ENCODE measurements at regions of chr3 and their contacts with region 1.

Region 1: GRCh38 chr3:192566706-192567290 is 160.5 kb downstream of the FGF12 start:
- DNase-seq: peak; percentile 74
- H3K4me3 ChIP-seq: no peak overlapping the region
- CTCF ChIP-seq: peak; percentile 71

Region 2: DNA sequence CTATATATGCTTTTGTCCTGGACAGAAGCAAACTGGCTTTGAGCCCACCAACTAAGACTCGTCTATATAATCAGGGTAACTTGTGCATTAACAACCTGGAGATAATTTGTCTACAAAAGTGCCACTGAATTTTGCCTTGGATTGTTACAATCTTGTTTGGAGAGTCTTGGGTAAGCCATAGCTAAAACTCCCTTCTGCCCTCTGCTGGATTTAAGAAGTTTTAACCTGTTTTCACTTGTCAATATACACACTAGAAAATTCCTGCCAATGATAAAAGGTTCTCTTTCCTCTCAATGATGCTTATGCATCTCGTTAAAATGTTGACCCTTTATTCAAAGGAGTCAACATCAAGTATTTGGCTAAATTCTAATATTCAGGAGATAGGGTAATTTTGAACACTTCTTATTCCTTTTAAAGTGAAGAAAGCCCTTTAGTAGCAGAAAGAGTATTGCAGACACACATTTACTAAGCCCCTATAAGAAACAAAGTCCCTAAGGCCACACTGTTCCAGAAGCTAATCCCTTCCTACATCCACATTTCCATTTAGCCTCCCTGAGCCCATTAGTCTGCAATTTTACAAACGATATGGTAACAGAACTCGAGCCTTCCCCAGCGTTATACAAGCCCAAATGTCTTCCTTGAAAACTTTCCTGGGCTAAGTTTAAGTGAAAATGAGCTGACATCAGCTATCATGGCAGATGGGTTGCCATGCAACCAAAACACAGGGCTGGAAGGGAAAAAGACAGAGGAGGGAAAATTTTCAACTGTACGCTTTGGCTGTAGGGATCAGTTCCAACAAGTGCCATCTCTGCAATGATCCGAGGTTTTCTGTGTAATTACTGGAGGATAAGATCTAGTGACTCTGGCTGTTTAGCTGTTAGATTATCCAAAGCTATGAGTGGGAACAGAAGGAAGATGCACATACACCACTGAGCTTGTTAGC is 236.4 kb after region 1 on chr3:
- CTCF ChIA-PET with region 1: interaction called, 68 read pairs
- POLR2A ChIA-PET with region 1: no interaction called
- DNase-seq: no peak
- H3K4me3 ChIP-seq: no peak overlapping the region
- CTCF ChIP-seq: peak; percentile 34

Region 3: GRCh38 chr3:193572426-193572908 is 1005.7 kb after region 1 on chr3:
- CTCF ChIA-PET with region 1: interaction called, 41 read pairs
- POLR2A ChIA-PET with region 1: no interaction called
- DNase-seq: no peak
- H3K4me3 ChIP-seq: no peak overlapping the region
- CTCF ChIP-seq: peak; percentile 78